ENCODE measurements at regions of chr5 and their contacts with region 1.

Region 1: DNA sequence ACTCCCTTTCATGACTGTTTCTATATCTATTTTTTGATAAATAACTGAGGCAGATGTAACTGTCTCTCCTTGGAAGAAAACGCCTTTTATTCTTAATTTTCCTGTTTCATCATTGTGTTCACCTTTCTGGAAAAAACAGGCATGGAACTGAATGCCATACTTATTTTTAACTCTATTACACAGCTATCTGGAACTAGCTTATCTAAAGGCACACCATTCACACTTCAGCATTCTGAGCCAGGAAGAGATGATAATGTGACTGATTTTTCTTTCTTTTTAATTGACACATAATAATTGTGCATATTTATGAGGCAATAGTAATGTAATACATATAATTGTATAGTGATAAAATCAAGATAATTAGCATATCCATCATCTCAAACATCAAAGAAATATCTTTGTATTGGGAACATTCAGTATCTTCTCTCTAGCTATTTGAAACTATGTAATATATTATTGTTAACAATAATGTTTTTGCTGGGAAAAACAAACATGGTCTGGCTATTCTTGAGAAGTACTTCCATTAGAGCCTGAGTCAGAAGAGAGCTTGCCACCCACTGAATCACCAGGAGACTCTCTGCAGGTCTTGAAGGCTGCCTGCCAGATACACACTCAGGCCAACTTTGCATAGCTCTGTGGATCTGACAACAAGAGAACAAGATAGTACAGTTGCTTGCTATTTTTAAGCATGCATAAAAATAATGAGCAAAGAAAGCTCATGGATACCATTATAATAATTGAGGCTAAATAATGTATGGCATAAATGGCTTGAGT is 501.0 kb upstream of the EDIL3 start:
- DNase-seq: no peak
- H3K4me3 ChIP-seq: no peak overlapping the region
- H3K27ac ChIP-seq: no peak overlapping the region
- H3K4me1 ChIP-seq: no peaks in the 10 kb centered on the region
- H3K27me3 ChIP-seq: no peaks in the 10 kb centered on the region
- CTCF ChIP-seq: no peak

Region 2: DNA sequence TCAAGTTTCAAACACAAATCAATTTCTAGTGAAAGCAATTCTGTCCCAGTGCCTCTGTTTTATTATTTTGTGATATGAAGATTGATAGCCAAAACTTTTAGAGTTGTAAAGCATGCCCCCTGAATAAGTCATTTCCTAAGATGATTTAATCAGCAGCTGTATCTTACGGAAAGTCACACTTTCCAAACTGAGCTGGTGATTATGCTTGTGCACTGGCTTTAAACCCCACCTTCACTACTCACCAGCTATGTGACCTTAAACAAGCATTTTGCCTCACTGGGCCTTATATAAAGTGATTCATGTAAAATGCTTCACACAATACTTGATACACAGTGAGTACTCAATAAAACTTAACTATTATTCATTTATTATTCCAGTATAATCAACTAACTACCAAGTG is 579.1 kb before region 1 on chr5:
- CTCF ChIA-PET with region 1: interaction called, 17 read pairs
- POLR2A ChIA-PET with region 1: no interaction called
- intact Hi-C with region 1: no loop called
- DNase-seq: no peak
- H3K4me3 ChIP-seq: no peak overlapping the region
- H3K27ac ChIP-seq: no peak overlapping the region
- H3K4me1 ChIP-seq: no peaks in the 10 kb centered on the region
- H3K27me3 ChIP-seq: no peaks in the 10 kb centered on the region
- CTCF ChIP-seq: no peak

Region 3: DNA sequence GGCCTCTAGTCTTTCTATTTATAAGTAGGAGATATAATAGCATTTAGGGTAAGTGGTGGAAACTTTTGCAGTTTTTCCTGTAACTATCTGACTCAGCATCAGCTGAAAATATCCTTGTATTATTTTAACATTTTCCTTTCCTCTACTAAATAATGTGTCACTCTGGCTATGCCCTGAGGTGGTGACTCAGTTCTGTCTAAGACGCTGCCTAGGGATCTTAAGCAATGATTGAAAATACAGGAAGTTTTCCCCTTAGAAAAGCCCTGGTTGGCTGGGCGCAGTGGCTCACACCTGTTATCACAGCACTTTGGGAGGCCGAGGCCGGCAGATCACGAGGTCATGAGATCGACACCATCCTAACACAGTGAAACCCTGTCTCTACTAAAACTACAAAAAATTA is 491.7 kb before region 1 on chr5:
- CTCF ChIA-PET with region 1: no interaction called
- POLR2A ChIA-PET with region 1: no interaction called
- intact Hi-C with region 1: no loop called
- DNase-seq: peak; percentile 65 to 72
- H3K4me3 ChIP-seq: no peak overlapping the region
- H3K27ac ChIP-seq: no peak overlapping the region
- H3K4me1 ChIP-seq: peaks cover 12% of the 10 kb centered on the region
- H3K27me3 ChIP-seq: no peaks in the 10 kb centered on the region
- CTCF ChIP-seq: no peak

Region 4: GRCh38 chr5:84825606-84826005 is 60.1 kb before region 1 on chr5:
- CTCF ChIA-PET with region 1: no interaction called
- POLR2A ChIA-PET with region 1: no interaction called
- intact Hi-C with region 1: no loop called
- DNase-seq: no peak
- H3K4me3 ChIP-seq: no peak overlapping the region
- H3K27ac ChIP-seq: no peak overlapping the region
- H3K4me1 ChIP-seq: no peaks in the 10 kb centered on the region
- H3K27me3 ChIP-seq: no peaks in the 10 kb centered on the region
- CTCF ChIP-seq: no peak

Region 5: GRCh38 chr5:85517386-85517785 is 631.7 kb after region 1 on chr5:
- CTCF ChIA-PET with region 1: no interaction called
- POLR2A ChIA-PET with region 1: no interaction called
- intact Hi-C with region 1: no loop called
- DNase-seq: no peak
- H3K4me3 ChIP-seq: no peak overlapping the region
- H3K27ac ChIP-seq: no peak overlapping the region
- H3K4me1 ChIP-seq: no peaks in the 10 kb centered on the region
- H3K27me3 ChIP-seq: no peaks in the 10 kb centered on the region
- CTCF ChIP-seq: no peak